Activated B cell treated with CpG ODN at 0.5 μM for 24 hours (primary cell): ENCODE measurements at regions of chr11 and their contacts with region 1.

Region 1: GRCh38 chr11:125111343-125112207 is at the start of gene TMEM218:
- DNase-seq: peak; percentile 82
- ATAC-seq: peak; percentile 96
- H3K4me3 Mint-ChIP-seq: peak within 1 kb of the TSS; percentile 98
- H3K27ac Mint-ChIP-seq: peak within 1 kb of the TSS; percentile 97
- H3K4me1 Mint-ChIP-seq: peaks cover 23% of the 10 kb centered on the region
- H3K27me3 Mint-ChIP-seq: peaks cover 4% of the 10 kb centered on the region
- CTCF ChIP-seq: no peak
- total RNA-seq, gene TMEM218: 18.8 and 20.1 TPM in 2 replicates

Region 2: DNA sequence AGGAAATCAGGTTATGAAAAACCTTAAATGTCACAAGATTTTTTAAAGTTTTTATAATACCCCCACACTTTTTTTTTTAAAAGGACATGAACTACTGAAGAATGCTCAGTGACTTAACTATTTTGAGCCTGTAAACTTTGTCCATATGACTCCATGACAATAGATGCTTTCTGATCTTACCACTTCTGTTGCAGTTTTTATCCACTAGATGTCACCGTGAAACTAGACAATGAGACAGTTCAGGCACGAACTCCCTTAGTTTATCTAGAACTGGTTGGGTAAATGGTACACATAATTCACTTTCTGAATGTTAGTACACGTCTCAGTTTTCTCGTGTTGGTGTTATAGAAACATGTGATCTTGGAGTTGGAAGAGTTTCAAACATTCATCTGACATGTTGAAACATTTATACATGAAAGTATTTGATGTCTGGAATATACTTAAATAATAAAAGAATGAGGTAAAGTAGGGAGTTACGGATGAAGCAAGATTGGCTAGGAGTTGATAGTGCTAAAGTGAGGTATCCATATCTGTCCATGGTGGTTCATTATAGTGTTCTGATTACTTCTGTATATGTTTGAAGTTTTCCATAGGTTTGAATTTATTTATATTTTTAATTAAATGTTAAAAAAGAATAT is 149.5 kb before region 1 on chr11:
- CTCF ChIA-PET with region 1: no interaction called
- POLR2A ChIA-PET with region 1: interaction called, 14 read pairs
- intact Hi-C with region 1: no loop called
- DNase-seq: no peak
- ATAC-seq: peak; percentile 82
- H3K4me3 Mint-ChIP-seq: no peak overlapping the region
- H3K27ac Mint-ChIP-seq: no peak overlapping the region
- H3K4me1 Mint-ChIP-seq: no peaks in the 10 kb centered on the region
- H3K27me3 Mint-ChIP-seq: no peaks in the 10 kb centered on the region
- CTCF ChIP-seq: no peak

Region 3: DNA sequence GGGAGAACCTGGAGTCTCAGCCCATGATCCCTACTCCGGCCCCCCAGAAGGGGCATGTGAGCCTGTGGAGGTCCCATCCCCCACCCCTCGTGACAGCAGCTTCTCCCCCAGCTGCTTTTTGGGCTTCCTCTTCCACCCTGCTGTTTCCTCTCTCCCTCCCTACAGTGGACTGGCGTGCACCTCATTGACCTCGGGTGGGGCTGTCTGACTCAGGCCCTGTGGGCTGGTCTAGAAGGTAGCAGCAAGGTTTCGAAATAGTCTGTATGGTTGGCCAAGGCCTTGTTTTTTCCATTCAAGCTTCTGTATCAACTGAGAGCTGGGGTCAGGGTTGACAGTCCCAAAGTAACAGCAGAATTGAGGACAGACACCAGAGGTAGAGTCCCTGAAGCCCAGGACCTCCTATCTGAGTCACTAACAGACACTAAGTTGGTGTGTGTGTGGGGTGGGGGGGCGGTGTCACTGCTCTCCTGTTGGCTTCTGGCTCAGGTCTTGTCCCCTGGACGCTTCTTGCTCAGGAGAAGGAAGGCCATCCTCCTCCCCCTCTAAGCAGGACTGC is 40.8 kb before region 1 on chr11:
- CTCF ChIA-PET with region 1: interaction called, 3 read pairs
- POLR2A ChIA-PET with region 1: interaction called, 53 read pairs
- intact Hi-C with region 1: loop called (anchors 1 kb)
- DNase-seq: no peak
- ATAC-seq: peak; percentile 69
- H3K4me3 Mint-ChIP-seq: peak overlapping the region; percentile 40
- H3K27ac Mint-ChIP-seq: peak overlapping the region; percentile 82
- H3K4me1 Mint-ChIP-seq: peaks cover 71% of the 10 kb centered on the region
- H3K27me3 Mint-ChIP-seq: peaks cover 2% of the 10 kb centered on the region
- CTCF ChIP-seq: no peak

Region 4: DNA sequence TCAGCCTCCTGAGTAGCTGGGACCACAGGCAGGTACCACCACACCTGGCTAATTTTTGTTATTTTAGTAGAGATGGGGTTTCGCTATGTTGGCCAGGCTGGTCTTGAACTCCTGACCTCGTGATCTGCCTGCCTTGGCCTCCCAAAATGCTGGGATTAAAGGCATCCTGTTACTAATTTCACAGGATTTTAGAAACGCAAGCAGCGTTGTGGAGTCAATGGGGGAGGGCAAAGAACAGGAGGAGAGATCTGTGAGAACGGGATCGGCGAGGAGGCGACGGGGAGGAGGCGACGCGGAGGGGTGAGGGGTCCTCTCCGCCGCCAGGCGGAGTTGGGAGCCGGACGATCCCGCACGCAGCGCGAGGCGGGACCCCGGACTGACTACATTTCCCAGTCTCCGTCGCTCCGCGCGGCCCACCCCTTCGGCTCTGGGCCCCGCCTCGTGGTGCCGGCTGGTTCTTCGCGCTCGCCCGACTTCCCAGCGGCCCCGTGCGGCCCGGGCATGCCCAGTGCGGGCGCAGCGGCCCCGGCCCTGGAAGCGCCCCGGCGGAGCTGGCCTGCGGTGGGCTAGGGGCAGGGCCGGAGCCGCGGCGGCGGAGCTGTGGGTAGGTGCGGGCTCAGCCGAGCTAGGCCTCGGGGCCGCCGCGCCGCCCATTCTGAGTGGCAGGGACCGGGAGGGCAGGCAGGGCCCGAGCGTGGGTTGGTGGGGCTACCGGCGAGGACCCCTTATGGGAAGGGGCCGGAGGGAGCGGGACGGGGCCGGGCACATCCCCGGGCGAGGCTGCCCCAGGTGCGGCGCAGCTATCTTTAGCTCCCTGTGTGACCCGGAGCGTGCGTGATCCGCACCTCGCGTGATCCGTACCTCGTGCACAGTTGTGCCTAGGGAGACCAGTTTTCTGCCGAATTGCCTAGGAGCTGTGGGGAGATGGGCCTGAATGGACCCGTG is 457.7 kb after region 1 on chr11 and contains the start of gene EI24:
- CTCF ChIA-PET with region 1: no interaction called
- POLR2A ChIA-PET with region 1: interaction called, 5 read pairs
- intact Hi-C with region 1: loop called (anchors 1 kb)
- DNase-seq: peak; percentile 83
- ATAC-seq: peak; percentile 97
- H3K4me3 Mint-ChIP-seq: peak within 1 kb of the TSS; percentile 93
- H3K27ac Mint-ChIP-seq: peak within 1 kb of the TSS; percentile 88
- H3K4me1 Mint-ChIP-seq: peaks cover 22% of the 10 kb centered on the region
- H3K27me3 Mint-ChIP-seq: no peaks in the 10 kb centered on the region
- CTCF ChIP-seq: no peak
- total RNA-seq, gene EI24: 34.3 and 34.5 TPM in 2 replicates

Region 5: GRCh38 chr11:126268708-126269579 is 1157.4 kb after region 1 on chr11 and contains the starts of genes FOXRED1 and SRPRA:
- CTCF ChIA-PET with region 1: no interaction called
- POLR2A ChIA-PET with region 1: no interaction called
- intact Hi-C with region 1: loop called (anchors 10 kb)
- DNase-seq: peak; percentile 99
- ATAC-seq: peak; percentile 98
- H3K4me3 Mint-ChIP-seq: peak within 1 kb of the TSS; percentile 95
- H3K27ac Mint-ChIP-seq: peak within 1 kb of the TSS; percentile 95
- H3K4me1 Mint-ChIP-seq: peaks cover 33% of the 10 kb centered on the region
- H3K27me3 Mint-ChIP-seq: no peaks in the 10 kb centered on the region
- CTCF ChIP-seq: no peak
- total RNA-seq, gene FOXRED1: 39.1 and 44.9 TPM in 2 replicates
- total RNA-seq, gene SRPRA: 121 and 128 TPM in 2 replicates